Activated B cell treated with CpG ODN at 0.5 μM for 24 hours (primary cell): ENCODE measurements at regions of chr16 and their contacts with region 1.

Region 1: GRCh38 chr16:55465077-55465896 is 13.7 kb upstream of the MMP2 start:
- DNase-seq: peak; percentile 73
- ATAC-seq: peak; percentile 98
- H3K4me3 Mint-ChIP-seq: no peak overlapping the region
- H3K27ac Mint-ChIP-seq: no peak overlapping the region
- H3K4me1 Mint-ChIP-seq: no peaks in the 10 kb centered on the region
- H3K27me3 Mint-ChIP-seq: no peaks in the 10 kb centered on the region
- CTCF ChIP-seq: peak; percentile 86

Region 2: DNA sequence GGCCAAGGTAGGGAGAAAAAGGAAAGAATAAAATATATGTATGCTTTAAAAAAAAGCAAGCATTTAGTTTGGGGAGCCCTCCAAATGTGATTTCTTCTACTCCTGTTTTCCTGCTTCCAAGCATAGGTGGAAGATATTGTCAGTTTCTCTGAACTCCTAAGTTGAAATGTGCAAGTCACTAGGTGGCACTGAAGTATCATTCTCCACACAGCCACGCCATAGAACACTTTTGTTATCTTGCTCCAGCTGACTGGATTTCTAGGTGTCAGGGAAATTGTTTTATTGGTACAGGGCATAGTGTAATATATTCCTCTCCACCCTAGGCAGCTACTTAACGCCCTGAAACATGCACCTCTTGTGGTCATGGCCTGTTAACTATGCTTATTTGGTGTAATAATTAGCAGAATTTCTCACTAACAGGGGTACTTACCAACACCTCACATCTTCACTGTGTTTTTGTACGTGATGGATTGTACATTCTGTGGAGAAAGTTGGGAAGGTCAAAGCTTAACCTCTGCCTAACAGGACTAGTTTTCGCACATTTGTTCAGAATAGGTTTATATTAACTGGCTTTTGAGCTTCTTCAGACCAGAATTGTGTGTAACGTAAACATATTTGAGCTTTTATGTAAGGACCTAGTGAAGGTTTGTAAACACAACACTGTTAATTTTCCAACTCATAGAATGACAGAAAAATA is 1692.0 kb before region 1 on chr16:
- CTCF ChIA-PET with region 1: interaction called, 6 read pairs
- POLR2A ChIA-PET with region 1: no interaction called
- intact Hi-C with region 1: loop called (anchors 10 kb)
- DNase-seq: no peak
- ATAC-seq: no peak
- H3K4me3 Mint-ChIP-seq: no peak overlapping the region
- H3K27ac Mint-ChIP-seq: no peak overlapping the region
- H3K4me1 Mint-ChIP-seq: peaks cover 24% of the 10 kb centered on the region
- H3K27me3 Mint-ChIP-seq: no peaks in the 10 kb centered on the region
- CTCF ChIP-seq: no peak

Region 3: GRCh38 chr16:55393991-55394390 is 71.3 kb before region 1 on chr16:
- CTCF ChIA-PET with region 1: no interaction called
- POLR2A ChIA-PET with region 1: no interaction called
- intact Hi-C with region 1: no loop called
- DNase-seq: no peak
- ATAC-seq: no peak
- H3K4me3 Mint-ChIP-seq: no peak overlapping the region
- H3K27ac Mint-ChIP-seq: no peak overlapping the region
- H3K4me1 Mint-ChIP-seq: no peaks in the 10 kb centered on the region
- H3K27me3 Mint-ChIP-seq: peaks cover 1% of the 10 kb centered on the region
- CTCF ChIP-seq: no peak

Region 4: GRCh38 chr16:55701442-55702319 is 236.4 kb after region 1 on chr16:
- CTCF ChIA-PET with region 1: interaction called, 14 read pairs
- POLR2A ChIA-PET with region 1: no interaction called
- intact Hi-C with region 1: no loop called
- DNase-seq: no peak
- ATAC-seq: no peak
- H3K4me3 Mint-ChIP-seq: no peak overlapping the region
- H3K27ac Mint-ChIP-seq: no peak overlapping the region
- H3K4me1 Mint-ChIP-seq: no peaks in the 10 kb centered on the region
- H3K27me3 Mint-ChIP-seq: peaks cover 5% of the 10 kb centered on the region
- CTCF ChIP-seq: no peak

Region 5: DNA sequence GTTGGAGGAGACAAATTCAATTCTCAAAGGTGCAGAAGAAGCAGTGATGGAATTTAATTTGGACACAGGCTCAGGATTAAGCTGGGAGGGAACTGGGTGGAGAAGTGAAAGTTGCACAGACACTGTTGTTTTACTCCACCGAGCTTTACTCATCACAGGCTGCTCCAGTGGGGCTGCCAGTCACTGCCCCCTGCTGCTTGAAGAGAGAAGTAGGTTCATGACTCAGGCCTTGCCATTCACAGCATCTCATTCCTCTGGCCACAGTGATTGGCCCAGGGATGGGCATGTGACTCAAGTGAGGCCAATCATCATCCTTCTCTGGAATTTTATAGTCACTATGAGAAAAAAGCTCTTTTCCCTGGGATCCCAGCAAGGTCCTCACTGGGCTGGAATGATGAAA is 737.8 kb after region 1 on chr16:
- CTCF ChIA-PET with region 1: interaction called, 3 read pairs
- POLR2A ChIA-PET with region 1: no interaction called
- intact Hi-C with region 1: loop called (anchors 1 kb)
- DNase-seq: no peak
- ATAC-seq: peak; percentile 92
- H3K4me3 Mint-ChIP-seq: no peak overlapping the region
- H3K27ac Mint-ChIP-seq: no peak overlapping the region
- H3K4me1 Mint-ChIP-seq: peaks cover 25% of the 10 kb centered on the region
- H3K27me3 Mint-ChIP-seq: no peaks in the 10 kb centered on the region
- CTCF ChIP-seq: no peak

Region 6: GRCh38 chr16:56356276-56357240 is 891.3 kb after region 1 on chr16:
- CTCF ChIA-PET with region 1: interaction called, 11 read pairs
- POLR2A ChIA-PET with region 1: no interaction called
- intact Hi-C with region 1: loop called (anchors 1 kb)
- DNase-seq: peak; percentile 57
- ATAC-seq: peak; percentile 92
- H3K4me3 Mint-ChIP-seq: peak overlapping the region; percentile 80
- H3K27ac Mint-ChIP-seq: peak overlapping the region; percentile 42
- H3K4me1 Mint-ChIP-seq: peaks cover 18% of the 10 kb centered on the region
- H3K27me3 Mint-ChIP-seq: no peaks in the 10 kb centered on the region
- CTCF ChIP-seq: peak; percentile 61